ENCODE measurements at regions of chr11 and their contacts with region 1.

Region 1: DNA sequence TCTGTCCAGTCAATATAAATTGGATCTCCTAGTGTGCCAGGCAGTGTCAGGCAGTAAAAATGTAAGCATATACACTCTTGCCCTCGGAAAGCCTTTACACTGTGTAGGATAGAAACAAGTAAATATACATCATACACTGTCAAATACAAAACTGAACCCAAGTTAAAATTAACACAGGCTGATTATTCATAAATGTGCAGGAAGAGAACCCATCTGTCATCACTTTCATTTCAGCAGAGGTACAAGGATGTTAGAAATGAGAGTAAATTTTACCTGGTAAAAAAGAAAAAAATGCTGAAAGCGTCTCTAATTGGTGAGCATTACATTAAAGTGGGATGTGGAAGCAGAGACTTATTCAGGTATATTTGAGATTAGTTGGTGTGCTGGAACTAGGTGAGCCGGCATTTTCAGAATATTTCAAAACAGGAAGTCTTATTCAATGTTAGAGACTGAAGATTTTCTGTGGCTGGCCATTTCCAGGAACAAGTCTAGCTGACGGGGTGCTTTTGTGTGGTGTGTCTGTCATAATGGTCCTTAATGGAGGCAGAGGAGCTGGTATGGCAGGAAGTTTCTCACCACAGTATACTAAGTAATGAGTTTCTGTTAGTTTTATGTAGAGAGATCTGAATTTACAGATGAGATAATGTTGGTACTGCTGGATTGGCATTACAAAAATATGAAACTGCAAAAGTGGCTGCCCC is 192.6 kb downstream of the CASP12 start:
- DNase-seq: peak; percentile 63
- H3K4me3 ChIP-seq: peak overlapping the region in 1 of 3 experiments; percentile 2
- H3K27ac ChIP-seq: peak overlapping the region; percentile 32
- H3K4me1 ChIP-seq: peaks cover 25% of the 10 kb centered on the region
- H3K27me3 ChIP-seq: no peaks in the 10 kb centered on the region
- CTCF ChIP-seq: no peak
- POLR2A ChIP-seq: no peak

Region 2: GRCh38 chr11:104668797-104669463 is 36.7 kb before region 1 on chr11:
- CTCF ChIA-PET with region 1: no interaction called
- POLR2A ChIA-PET with region 1: no interaction called
- dilution Hi-C with region 1: no loop called
- intact Hi-C with region 1: loop called (anchors 2 kb)
- DNase-seq: peak; percentile 74
- H3K4me3 ChIP-seq: no peak overlapping the region
- H3K27ac ChIP-seq: no peak overlapping the region
- H3K4me1 ChIP-seq: peaks cover 8% of the 10 kb centered on the region
- H3K27me3 ChIP-seq: no peaks in the 10 kb centered on the region
- CTCF ChIP-seq: no peak
- POLR2A ChIP-seq: no peak

Region 3: DNA sequence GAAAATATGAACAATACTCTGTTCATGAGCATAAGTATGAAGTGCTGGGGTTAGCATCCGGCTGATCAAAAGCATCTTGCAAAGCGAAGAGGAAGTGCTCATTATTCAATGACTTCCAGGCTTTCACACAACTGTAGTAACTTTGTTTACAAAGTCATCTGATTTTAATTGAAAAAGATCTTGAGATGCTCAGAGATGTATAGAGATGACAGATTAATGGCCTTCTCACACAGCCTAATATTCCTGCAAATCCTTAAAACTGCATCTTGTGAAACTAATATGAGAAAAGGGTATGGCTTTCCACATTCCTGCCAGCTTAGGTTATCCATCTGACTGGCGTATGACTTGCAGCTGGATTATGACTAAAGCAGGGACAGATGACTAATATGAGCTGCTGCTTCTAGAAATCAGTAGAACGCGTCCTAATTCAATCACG is 67.2 kb after region 1 on chr11:
- CTCF ChIA-PET with region 1: no interaction called
- POLR2A ChIA-PET with region 1: no interaction called
- dilution Hi-C with region 1: no loop called
- intact Hi-C with region 1: loop called (anchors 5 kb)
- DNase-seq: peak; percentile 88
- H3K4me3 ChIP-seq: no peak overlapping the region
- H3K27ac ChIP-seq: peak overlapping the region; percentile 53
- H3K4me1 ChIP-seq: peaks cover 17% of the 10 kb centered on the region
- H3K27me3 ChIP-seq: no peaks in the 10 kb centered on the region
- CTCF ChIP-seq: no peak
- POLR2A ChIP-seq: peak; percentile 20